ENCODE measurements at regions of chr12 and their contacts with region 1.

Region 1: DNA sequence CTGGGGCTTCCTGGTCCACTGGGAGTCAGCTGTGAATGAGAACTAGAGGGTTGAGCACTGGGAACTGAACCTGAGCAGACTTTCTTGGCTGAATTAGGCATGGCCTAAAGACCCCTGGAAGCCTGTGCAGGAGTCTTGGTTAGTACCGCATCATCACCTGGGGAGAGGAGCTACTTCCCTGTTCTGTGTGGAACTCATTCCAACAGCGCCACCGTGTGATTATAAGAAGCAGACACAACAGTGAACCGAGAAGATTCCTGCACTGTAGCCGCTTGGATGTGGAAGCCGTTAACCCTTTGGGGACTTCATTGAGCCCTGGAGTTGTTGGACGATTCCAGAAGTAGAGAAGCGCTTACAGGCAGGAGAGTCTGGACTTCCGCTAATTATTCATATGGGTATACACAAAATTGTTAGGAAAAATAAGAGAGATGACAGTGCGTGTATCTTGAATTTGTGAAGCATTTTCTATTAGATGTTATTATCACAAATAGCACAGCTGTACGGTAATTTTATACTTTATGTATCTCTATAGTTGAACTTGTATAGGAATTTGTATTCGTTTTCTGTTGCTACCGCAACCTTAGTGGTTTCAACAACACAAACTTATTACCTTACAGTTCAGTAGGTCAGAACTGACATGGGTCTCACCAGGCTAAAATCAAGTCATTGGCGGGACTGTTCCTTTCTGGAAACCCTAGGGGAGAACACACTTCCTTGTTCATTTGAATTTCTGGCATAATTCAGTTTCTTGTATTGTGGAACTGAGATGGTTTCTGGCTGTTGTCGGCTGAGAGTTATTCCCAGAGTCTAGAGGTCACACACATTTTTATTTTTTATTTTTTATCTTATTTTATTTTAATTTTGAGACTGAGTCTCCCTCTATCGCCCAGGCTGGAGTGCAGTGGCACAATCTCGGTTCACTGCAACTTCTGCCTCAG is 100.7 kb downstream of the C2CD5 start:
- DNase-seq: peak; percentile 41 to 62 (median 53)
- ATAC-seq: peak; percentile 97
- H3K4me3 ChIP-seq: no peak overlapping the region
- H3K27ac ChIP-seq: no peak overlapping the region
- H3K4me1 ChIP-seq: no peaks in the 10 kb centered on the region
- H3K27me3 ChIP-seq: no peaks in the 10 kb centered on the region

Region 2: DNA sequence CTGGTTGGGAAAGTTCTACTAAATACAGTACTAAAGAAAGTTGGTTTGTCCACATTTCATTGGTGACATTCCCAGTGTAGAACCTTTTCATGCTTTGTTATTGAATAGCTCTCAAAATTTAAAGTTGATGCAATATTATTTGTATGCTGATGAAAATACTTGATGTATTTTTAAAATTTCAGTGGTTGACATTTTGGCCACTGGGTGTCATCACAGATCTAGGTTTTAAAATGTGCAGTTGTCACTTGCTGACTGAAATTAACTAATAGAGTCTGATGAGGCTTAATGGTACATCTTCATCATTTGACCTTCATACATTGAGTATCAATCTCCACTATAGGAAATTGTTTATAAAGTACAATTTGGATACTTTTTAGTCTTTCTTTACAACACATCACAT is 360.5 kb before region 1 on chr12:
- intact Hi-C with region 1: loop called (anchors 5 kb)
- DNase-seq: no peak
- ATAC-seq: peak in 1 of 2 donors; percentile 40
- H3K4me3 ChIP-seq: no peak overlapping the region
- H3K27ac ChIP-seq: no peak overlapping the region
- H3K4me1 ChIP-seq: no peaks in the 10 kb centered on the region
- H3K27me3 ChIP-seq: no peaks in the 10 kb centered on the region

Region 3: DNA sequence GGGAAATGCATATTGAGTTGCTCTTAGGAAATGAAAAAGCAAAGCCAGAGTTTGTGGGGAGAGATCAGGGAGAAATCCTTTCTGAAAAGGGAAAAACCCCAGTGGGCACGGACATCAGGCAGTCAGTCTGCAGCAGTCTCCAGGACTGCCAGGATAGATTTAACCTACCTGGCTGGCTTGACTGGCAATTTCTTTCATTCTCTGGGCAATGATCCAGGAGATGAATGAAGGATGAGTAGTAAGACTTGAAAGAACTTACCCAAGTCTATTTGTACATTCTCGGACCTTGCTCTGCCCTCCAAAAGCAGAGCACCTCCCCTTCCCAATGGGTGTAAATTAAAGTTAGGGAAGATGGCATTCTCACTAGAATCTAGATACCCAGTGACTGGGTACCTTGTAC is 354.8 kb before region 1 on chr12:
- intact Hi-C with region 1: loop called (anchors 5 kb)
- DNase-seq: no peak
- ATAC-seq: no peak
- H3K4me3 ChIP-seq: no peak overlapping the region
- H3K27ac ChIP-seq: no peak overlapping the region
- H3K4me1 ChIP-seq: no peaks in the 10 kb centered on the region
- H3K27me3 ChIP-seq: no peaks in the 10 kb centered on the region

Region 4: DNA sequence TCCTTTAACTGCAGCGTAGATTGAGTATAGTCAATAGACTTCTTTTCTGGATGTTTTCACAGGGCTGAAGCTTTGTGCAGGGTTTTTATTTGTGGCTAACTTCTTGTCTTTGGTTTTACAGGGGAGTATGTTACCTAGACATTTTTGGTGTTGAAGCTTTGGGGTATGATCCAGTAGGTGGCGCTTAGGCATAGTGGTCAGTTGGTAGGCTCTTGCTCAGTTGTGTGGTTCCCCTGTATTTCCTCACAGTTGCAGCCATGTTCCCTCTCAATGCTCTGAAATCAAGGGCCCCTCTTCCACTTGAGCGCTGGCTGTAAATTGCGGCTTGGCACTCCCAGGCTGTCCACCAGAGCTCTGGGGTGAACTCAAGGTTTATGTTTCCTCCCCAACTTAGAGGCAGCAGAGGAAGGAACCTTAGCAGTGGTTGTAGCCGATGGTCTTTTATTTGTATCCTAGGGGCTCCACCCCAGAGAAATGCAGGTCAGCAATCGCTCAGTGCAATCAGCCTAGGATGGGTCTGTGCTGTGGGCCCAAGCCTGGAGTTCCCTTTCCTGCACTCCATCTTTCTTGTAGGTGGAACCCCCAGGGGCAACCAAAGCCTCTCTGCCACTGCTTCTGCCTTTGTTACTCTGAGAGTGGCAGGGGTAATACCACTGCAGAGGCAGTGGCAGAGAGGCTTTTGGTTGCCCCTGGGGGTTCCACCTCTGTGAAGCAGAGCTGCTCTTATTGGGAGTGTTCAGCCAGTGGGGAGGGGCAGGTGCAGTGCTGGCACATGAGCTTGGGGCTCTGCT is 342.5 kb before region 1 on chr12:
- intact Hi-C with region 1: loop called in 2 of 4 experiments (anchors 5 kb)
- DNase-seq: peak in 1 of 3 donors; percentile 23
- ATAC-seq: peak; percentile 46 to 66
- H3K4me3 ChIP-seq: no peak overlapping the region
- H3K27ac ChIP-seq: no peak overlapping the region
- H3K4me1 ChIP-seq: no peaks in the 10 kb centered on the region
- H3K27me3 ChIP-seq: no peaks in the 10 kb centered on the region

Region 5: GRCh38 chr12:22334410-22335290 is 109.0 kb before region 1 on chr12 and contains the start of gene ST8SIA1:
- intact Hi-C with region 1: loop called in 1 of 4 experiments (anchors 5 kb)
- DNase-seq: peak; percentile 53 to 85 (median 81)
- ATAC-seq: peak; percentile 71 to 73
- H3K4me3 ChIP-seq: peak within 1 kb of the TSS; percentile 85
- H3K27ac ChIP-seq: peak within 1 kb of the TSS; percentile 46
- H3K4me1 ChIP-seq: no peaks in the 10 kb centered on the region
- H3K27me3 ChIP-seq: no peaks in the 10 kb centered on the region
- total RNA-seq, gene ST8SIA1: 3.0 to 9.6 (median 6.3) TPM